HEK293T (cell line): ENCODE measurements at regions of chr17 and their contacts with region 1.

Region 1: GRCh38 chr17:82065638-82066303 is at the start of gene DUS1L:
- DNase-seq: peak; percentile 86

Region 2: DNA sequence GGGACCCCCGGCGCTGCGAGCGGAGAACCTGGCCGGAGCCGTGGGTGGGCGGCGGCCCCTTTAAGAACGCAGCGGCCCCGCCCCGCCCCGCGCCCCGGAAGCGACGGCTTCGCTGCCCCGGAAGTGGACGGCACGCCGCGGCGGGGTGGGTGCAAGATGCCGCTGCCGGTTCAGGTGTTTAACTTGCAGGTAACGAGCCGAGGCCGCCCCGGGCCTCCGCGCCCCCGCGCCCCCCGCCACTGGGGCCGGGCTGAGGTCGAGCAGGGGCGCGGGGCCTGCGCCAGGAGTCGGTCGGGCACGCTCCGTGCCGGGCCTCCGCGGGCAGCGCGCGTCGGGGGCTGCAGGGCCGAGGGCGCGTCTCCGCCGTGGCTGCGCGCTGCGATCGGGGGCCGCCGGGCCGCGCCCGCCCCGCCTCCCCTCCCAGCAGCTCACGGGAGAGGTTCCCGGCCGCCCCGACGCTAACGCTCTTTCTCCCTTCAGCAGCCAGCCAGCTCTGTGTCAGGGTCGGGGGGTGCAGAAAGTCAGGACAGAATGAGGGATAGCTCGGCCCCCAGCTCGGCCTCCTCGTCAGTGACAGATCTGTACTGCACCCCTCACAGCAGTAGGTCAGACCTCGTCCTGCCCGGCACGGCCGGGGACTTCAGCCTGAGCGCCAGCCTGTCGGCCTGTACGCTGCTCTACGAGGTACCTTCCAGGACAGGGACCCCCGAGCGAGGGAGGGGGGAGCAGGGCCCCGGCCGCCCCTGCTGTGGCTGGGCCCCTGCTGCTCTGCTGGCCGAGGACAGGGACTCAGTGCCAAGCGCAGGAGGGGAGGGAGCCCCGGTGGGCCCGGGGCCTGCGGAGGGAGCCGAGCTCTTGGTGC is 13.8 kb before region 1 on chr17 and contains the starts of genes GPS1 and RFNG:
- CTCF ChIA-PET with region 1: no interaction called
- POLR2A ChIA-PET with region 1: interaction called, 46 read pairs
- DNase-seq: peak; percentile 85

Region 3: DNA sequence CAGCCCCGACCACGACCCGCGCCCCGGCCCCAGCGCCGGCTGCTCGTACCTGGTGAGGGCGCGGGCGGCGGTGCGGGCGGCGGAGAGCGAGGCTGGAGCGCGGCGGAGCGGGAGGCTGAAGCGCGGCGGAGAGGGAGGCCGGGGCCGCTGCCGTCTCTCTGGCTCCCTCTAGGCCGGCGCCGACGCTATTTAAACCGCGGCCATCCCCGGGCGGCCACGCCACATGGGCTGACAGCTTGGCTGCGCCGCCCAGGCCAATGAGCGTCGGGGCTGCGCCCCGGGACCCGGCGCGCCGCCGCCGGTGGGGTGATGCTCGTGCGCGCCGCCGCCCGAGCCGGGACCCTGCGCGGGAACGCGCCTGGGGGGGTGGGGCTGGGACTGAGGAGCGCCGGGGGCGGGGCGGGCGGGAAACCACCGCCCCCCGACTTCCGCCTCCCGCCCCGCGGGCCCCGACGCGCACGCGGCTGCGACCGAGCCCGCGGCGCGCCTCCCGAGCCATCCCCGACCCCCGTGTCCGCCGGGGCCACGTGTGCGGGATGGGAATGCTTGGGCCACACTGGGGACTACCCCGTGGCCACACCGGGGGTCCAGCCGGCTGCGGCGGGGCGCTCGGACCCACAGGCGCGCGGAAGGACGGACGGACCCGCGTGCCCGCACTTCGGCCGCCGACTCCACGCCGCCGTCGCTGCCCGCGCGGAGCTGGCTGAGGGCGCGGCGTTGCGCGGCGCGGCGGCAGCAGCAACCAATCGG is 32.5 kb after region 1 on chr17 and contains the start of gene FASN:
- CTCF ChIA-PET with region 1: no interaction called
- POLR2A ChIA-PET with region 1: interaction called, 19 read pairs
- DNase-seq: peak; percentile 99